ENCODE measurements at regions of chr12 and their contacts with region 1.

Region 1: GRCh38 chr12:121399391-121400331 is at the start of gene RNF34:
- DNase-seq: peak; percentile 98 to 100 (median 99)
- ATAC-seq: peak; percentile 97
- H3K4me3 ChIP-seq: peak within 1 kb of the TSS; percentile 77
- H3K27ac ChIP-seq: peak within 1 kb of the TSS; percentile 90
- H3K4me1 ChIP-seq: peaks cover 0 to 16% of the 10 kb centered on the region in 2 experiments; a peak in 3 of 5 replicates
- H3K27me3 ChIP-seq: no peaks in the 10 kb centered on the region
- CTCF ChIP-seq: peak in 1 of 3 experiments; percentile 0; a peak in 1 of 6 replicates
- EP300 ChIP-seq: no peak; the same call in 1 of the 2 replicates
- POLR2A ChIP-seq: peak; percentile 98
- RAD21 ChIP-seq: no peak
- polyA plus RNA-seq, gene RNF34: 65.4 to 88.9 TPM

Region 2: DNA sequence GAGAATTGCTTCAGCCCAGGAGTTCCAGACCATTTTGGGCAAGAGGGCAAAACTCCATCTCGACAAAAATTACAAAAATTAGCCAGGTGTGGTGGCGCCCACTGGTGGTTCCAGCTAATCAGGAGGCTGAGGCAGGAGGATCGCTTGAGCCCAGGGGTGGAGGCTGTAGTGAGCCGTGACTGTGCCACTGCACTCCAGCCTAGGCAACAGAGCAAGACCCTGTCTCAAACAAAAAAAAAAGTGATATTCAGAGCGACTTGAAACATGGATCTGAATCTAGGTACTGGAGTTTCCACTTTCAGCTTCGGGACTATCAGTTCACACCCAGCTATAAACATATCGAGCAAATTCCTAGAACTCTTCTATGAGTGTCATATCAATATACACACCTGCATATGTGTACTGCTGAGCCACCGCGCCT is 16.1 kb before region 1 on chr12:
- CTCF ChIA-PET with region 1: no interaction called
- POLR2A ChIA-PET with region 1: interaction called, 15 read pairs
- in situ Hi-C with region 1: no loop called
- intact Hi-C with region 1: no loop called
- DNase-seq: peak in 1 of 4 experiments; percentile 33
- ATAC-seq: peak; percentile 40
- H3K4me3 ChIP-seq: no peak overlapping the region
- H3K27ac ChIP-seq: no peak overlapping the region
- H3K4me1 ChIP-seq: peaks cover 4% of the 10 kb centered on the region in 2 experiments; a peak in 3 of 5 replicates
- H3K27me3 ChIP-seq: no peaks in the 10 kb centered on the region
- CTCF ChIP-seq: peak; percentile 38 to 63 (median 42)
- EP300 ChIP-seq: 0 out of 2 replicates have a peak, but pooled peaks have one; percentile 17
- POLR2A ChIP-seq: no peak
- RAD21 ChIP-seq: peak in 1 of 2 experiments; percentile 32; a peak in 1 of 4 replicates

Region 3: DNA sequence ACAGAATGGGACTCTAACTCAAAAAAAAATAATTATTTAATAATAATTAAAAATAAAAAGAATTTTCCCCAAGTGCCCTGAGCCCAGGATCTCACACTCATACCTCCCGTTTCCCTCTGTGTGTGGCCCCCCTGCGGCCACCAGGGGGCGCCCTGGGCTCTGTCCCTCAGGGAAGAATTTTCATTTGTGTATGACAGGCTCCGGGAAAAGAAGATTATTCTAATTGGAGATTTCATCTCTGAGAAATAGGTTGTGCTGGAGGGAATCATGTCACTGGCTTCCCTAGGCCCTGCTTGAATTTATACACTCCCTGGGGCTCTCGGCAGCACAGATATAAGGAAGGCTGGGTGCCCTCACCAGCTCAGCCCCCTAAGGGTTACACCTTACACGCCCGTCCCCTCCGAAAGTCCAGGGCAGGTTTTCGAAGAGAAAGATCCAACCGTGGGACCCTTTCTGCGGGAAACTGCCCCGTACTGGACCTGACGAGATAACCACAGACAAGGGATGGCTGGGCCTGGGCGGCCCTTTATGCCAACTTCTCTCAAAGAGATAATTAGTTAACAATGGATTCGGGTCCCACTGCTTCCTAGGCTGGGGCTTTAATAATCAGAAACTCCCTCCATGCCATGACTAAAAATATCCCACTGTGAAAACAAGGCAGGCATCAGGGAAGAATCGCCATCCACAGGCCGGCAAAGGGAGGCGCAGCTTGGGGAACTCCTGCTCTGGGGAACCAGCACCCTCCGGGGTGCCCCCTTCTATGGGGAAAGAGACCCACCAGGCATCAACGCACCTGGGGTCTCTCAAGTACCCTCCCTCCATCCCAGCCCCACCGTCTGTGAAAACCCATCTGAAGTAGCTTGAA is 100.5 kb after region 1 on chr12:
- CTCF ChIA-PET with region 1: no interaction called
- POLR2A ChIA-PET with region 1: no interaction called
- in situ Hi-C with region 1: no loop called
- intact Hi-C with region 1: no loop called
- DNase-seq: peak; percentile 82 to 92 (median 90)
- ATAC-seq: peak; percentile 96
- H3K4me3 ChIP-seq: no peak overlapping the region
- H3K27ac ChIP-seq: no peak overlapping the region
- H3K4me1 ChIP-seq: no peaks in the 10 kb centered on the region; a peak in 1 of 5 replicates
- H3K27me3 ChIP-seq: no peaks in the 10 kb centered on the region
- CTCF ChIP-seq: peak; percentile 90 to 93 (median 92)
- EP300 ChIP-seq: no peak
- POLR2A ChIP-seq: no peak
- RAD21 ChIP-seq: peak; percentile 58 to 81

Measured in K562 (cell line).